HEK293 (cell line): ENCODE measurements at regions of chr19 and their contacts with region 1.

Region 1: GRCh38 chr19:39445265-39446111 is at the start of gene SUPT5H:
- H3K4me3 ChIP-seq: peak within 1 kb of the TSS; percentile 57
- H3K27ac ChIP-seq: peak within 1 kb of the TSS; percentile 98
- H3K4me1 ChIP-seq: peaks cover 23% of the 10 kb centered on the region
- CTCF ChIP-seq: peak; percentile 61

Region 2: DNA sequence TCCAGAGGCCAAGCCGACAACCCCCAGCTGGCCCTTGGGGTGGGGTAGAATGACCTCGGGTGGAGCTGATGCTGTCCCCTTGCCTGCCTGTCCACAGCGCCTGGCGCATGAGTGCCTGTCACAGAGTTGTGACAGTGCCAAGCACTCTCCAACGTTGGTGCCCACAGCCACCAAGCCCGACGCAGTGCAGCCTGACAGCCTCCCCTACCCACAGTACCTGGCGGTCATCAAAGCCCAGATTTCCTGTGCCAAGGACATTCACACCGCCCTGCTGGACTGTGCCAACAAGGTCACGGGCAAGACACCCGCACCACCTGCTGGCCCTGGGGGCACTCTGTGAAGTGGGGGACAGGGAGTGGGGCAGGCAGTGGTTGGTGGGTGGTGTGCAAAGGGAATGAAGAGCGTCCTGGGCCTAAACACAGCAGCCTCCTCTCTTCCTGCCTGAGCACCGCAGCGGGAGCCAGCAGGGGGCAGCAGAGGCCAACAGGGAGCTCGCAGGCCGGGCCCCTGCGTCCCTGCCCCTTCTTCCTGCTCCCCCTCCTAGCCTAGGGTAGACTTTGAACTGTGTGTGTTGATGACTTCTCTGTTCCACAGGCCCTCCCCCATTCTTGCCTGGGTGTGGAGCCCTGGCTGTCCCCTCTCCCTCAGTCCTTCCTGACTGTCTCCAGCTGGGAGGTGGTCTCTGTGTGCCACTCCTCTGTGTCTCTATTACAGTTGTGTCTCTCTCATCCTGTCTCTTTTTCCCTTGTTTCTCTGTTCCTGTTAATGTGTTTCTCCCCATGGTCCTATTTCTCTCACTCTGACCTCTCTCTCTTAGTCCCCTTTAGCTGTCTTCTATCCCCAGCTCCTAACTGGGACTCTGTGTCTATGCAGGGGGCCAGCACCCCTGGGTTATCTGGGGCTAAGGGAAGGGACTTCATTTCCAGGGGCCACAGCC is 47.9 kb before region 1 on chr19:
- CTCF ChIA-PET with region 1: interaction called, 16 read pairs
- POLR2A ChIA-PET with region 1: interaction called, 5 read pairs
- H3K4me3 ChIP-seq: no peak overlapping the region
- H3K27ac ChIP-seq: peak overlapping the region; percentile 3; the same call in 1 of the 2 replicates
- H3K4me1 ChIP-seq: peaks cover 10% of the 10 kb centered on the region
- CTCF ChIP-seq: peak; percentile 100

Region 3: DNA sequence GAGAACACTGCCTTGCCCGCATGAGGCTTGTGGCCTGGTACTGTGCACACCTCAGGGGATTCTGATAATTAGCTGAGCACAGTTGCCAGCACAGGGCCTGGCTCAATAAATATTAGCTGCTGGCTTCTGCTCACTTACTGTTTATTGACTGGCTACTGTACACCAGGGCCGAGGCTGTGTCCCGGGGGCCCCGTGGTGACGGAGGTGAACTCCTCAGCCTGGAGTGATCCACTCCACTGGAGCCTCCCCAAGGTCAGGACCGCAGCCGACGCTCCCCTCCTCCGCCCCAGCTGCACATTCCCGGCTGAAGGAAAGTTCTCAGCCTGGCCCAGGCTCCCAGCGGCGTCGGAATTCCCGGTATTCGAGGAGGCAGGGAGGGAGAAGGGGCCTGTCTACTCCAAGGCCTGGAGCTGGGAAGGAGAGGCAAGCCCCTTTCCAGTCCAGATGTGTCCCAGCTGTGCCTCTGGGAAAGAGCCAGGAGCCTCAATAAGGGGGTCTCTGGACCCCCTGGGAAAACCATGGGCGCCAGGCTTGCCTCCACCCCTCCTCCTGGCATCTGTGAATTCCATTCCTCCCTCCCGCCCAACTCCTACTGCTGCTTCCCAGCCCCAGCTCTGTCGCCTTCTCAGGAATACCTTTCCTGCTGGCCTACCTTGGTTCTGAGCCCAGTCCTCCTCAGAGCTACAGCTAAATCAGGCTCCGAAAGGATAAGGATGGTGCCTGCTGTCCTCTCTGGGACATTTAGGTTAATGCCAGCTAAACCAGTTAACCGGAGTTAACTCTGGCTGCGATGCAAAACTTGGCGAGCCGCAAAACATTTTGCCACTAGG is 17.0 kb before region 1 on chr19:
- CTCF ChIA-PET with region 1: interaction called, 13 read pairs
- POLR2A ChIA-PET with region 1: interaction called, 24 read pairs
- H3K4me3 ChIP-seq: no peak overlapping the region
- H3K27ac ChIP-seq: peak overlapping the region; percentile 40; the same call in 1 of the 2 replicates
- H3K4me1 ChIP-seq: peaks cover 10% of the 10 kb centered on the region
- CTCF ChIP-seq: no peak; the same call in 1 of the 2 replicates

Region 4: DNA sequence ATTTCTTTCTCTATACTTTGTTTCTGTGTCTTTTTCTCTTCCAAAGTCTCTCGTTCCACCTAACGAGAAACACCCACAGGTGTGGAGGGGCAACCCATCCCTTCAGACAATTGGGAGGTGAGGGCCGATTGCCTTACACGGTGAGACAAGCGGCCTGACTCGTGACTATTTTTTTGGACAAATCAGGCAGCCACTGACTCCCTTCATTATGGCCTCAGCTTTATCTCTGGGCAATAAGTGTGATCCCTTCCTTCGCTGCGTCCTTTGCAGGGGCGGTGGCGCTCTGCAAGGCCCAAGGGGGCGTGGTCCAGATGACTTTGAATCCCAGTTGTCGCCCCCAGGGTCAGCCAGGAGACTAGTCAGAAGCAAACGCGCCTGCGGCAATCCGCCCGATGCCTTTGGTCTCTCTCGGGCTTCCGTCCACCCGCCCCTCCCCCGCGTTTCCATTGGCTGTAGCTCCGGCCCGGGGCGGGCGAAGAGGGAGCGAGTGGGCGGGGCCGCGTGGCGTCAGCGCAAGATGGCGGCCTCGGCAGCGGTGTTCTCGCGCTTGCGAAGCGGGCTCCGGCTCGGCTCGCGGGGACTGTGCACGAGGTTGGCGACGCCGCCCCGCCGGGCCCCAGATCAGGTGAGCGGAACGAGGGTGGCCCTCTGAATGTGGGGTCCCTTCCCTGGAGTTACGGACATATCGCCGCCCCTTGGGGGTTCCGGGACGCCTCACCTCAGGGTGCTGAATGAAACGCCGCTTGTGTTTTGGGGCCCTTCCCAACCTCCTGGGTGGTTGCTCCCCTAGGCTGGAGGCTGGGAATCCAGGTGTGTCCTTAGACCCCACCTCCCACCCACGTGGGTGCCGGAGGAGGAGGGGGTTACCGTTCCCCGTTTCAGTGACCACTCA is 35.1 kb after region 1 on chr19 and contains the start of gene TIMM50:
- CTCF ChIA-PET with region 1: interaction called, 8 read pairs
- POLR2A ChIA-PET with region 1: interaction called, 11 read pairs
- H3K4me3 ChIP-seq: peak within 1 kb of the TSS; percentile 65
- H3K27ac ChIP-seq: peak within 1 kb of the TSS; percentile 88
- H3K4me1 ChIP-seq: peaks cover 15% of the 10 kb centered on the region
- CTCF ChIP-seq: peak; percentile 96

Region 5: GRCh38 chr19:39502640-39503417 is 57.3 kb after region 1 on chr19:
- CTCF ChIA-PET with region 1: interaction called, 20 read pairs
- POLR2A ChIA-PET with region 1: interaction called, 7 read pairs
- H3K4me3 ChIP-seq: no peak overlapping the region
- H3K27ac ChIP-seq: no peak overlapping the region
- H3K4me1 ChIP-seq: peaks cover 19% of the 10 kb centered on the region
- CTCF ChIP-seq: peak; percentile 71

Region 6: DNA sequence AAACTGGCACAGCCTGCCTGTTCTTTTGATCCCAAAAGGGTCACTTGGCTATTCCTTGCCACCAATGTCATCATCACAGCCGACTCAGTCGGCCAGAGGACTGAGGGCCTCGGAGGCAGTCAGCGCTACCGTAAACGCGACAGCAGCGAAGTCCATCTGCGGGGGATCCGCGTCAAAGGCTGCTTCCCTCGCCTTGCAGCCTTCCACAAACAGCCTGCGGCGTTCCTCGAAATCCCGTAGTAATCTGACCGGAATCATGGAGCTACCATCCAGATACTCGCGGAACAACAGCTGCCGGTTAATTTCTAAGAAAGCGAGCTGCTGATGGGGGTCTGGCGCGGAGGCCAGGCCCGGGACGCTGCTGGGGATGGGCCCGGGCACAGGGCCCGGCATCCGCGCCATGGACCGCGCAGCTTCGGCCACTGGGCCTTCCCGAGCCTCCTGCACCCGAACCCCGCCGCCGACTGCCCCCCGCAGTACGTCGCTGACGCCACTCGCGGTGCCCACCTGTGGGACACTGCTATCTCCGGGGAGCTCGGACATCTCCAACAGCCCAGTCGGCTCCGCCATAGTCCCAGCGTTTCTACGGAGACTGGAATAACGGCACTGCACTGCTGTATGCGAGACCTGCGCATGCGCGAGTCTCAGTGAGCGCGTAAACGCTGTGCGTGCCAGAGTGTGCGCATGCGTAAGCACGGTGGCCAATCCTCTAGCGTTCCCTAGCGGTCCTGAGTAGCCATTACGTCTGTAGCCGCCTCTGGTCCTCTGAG is 86.9 kb after region 1 on chr19 and contains the start of gene EID2B:
- CTCF ChIA-PET with region 1: interaction called, 111 read pairs
- POLR2A ChIA-PET with region 1: interaction called, 13 read pairs
- H3K4me3 ChIP-seq: peak within 1 kb of the TSS; percentile 88
- H3K27ac ChIP-seq: peak within 1 kb of the TSS; percentile 85
- H3K4me1 ChIP-seq: peaks cover 20% of the 10 kb centered on the region
- CTCF ChIP-seq: peak; percentile 100

Region 7: GRCh38 chr19:39546599-39546998 is 101.1 kb after region 1 on chr19:
- CTCF ChIA-PET with region 1: interaction called, 14 read pairs
- POLR2A ChIA-PET with region 1: no interaction called
- H3K4me3 ChIP-seq: no peak overlapping the region
- H3K27ac ChIP-seq: no peak overlapping the region
- H3K4me1 ChIP-seq: peaks cover 3% of the 10 kb centered on the region; the same call in 1 of the 2 replicates
- CTCF ChIP-seq: no peak